ENCODE measurements at regions of chr10 and their contacts with region 1.

Region 1: DNA sequence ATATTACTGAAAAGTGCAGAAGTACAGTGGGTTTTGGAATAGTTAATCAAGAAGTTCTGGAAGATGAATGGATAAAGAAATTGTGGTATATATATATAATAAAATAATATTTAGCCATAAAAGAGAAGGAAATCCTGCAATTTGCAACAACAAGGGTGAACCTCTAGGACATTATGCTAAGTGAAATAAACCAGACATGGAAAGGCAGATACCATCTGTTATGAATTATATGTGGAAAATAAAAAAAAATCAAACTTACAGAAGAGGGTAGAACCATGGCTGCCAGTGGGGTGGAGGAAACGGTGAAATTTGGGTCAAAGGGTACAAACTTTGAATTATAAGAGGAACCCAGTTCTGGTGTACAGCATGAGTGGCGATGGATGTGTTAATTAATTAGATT is 162.6 kb downstream of the BICC1 start:
- DNase-seq: no peak
- H3K4me3 ChIP-seq: no peak overlapping the region
- H3K4me3 Mint-ChIP-seq: no peak overlapping the region
- H3K27ac Mint-ChIP-seq: no peak overlapping the region
- H3K4me1 ChIP-seq: no peaks in the 10 kb centered on the region
- H3K4me1 Mint-ChIP-seq: no peaks in the 10 kb centered on the region
- H3K27me3 ChIP-seq: no peaks in the 10 kb centered on the region
- H3K27me3 Mint-ChIP-seq: no peaks in the 10 kb centered on the region
- CTCF ChIP-seq: no peak

Region 2: GRCh38 chr10:58698777-58699356 is 23.5 kb after region 1 on chr10:
- CTCF ChIA-PET with region 1: no interaction called
- POLR2A ChIA-PET with region 1: no interaction called
- intact Hi-C with region 1: no loop called
- DNase-seq: no peak
- H3K4me3 ChIP-seq: no peak overlapping the region
- H3K4me3 Mint-ChIP-seq: no peak overlapping the region
- H3K27ac Mint-ChIP-seq: no peak overlapping the region
- H3K4me1 ChIP-seq: peaks cover 17% of the 10 kb centered on the region; the same call in 1 of the 2 replicates
- H3K4me1 Mint-ChIP-seq: peaks cover 14% of the 10 kb centered on the region
- H3K27me3 ChIP-seq: no peaks in the 10 kb centered on the region
- H3K27me3 Mint-ChIP-seq: no peaks in the 10 kb centered on the region
- CTCF ChIP-seq: no peak

Region 3: DNA sequence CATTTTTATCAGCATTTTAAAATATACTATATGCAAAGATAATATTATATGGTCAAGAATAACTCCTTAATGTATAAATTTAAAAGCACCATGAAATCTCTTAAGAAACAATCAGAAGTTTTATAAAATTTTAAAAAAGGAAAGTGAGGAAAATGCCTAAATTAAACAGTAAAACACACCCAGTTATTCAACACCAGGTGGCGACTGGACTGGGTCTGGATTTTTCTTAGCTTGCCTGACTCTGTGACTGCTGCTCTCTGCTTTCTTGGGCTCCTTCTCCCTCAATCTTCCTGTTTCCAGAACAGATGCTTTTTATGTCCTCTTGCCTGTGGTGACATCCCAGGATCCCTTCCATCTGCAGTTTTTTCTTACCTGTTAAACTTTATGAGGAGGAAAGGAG is 37.7 kb after region 1 on chr10:
- CTCF ChIA-PET with region 1: no interaction called
- POLR2A ChIA-PET with region 1: no interaction called
- intact Hi-C with region 1: loop called (anchors 2 kb)
- DNase-seq: peak in 1 of 2 experiments; percentile 22
- H3K4me3 ChIP-seq: no peak overlapping the region
- H3K4me3 Mint-ChIP-seq: no peak overlapping the region
- H3K27ac Mint-ChIP-seq: no peak overlapping the region
- H3K4me1 ChIP-seq: no peaks in the 10 kb centered on the region
- H3K4me1 Mint-ChIP-seq: no peaks in the 10 kb centered on the region
- H3K27me3 ChIP-seq: no peaks in the 10 kb centered on the region
- H3K27me3 Mint-ChIP-seq: no peaks in the 10 kb centered on the region
- CTCF ChIP-seq: peak; percentile 38 to 49